AG04449 (cell line): ENCODE measurements at regions of chr3 and their contacts with region 1.

Region 1: DNA sequence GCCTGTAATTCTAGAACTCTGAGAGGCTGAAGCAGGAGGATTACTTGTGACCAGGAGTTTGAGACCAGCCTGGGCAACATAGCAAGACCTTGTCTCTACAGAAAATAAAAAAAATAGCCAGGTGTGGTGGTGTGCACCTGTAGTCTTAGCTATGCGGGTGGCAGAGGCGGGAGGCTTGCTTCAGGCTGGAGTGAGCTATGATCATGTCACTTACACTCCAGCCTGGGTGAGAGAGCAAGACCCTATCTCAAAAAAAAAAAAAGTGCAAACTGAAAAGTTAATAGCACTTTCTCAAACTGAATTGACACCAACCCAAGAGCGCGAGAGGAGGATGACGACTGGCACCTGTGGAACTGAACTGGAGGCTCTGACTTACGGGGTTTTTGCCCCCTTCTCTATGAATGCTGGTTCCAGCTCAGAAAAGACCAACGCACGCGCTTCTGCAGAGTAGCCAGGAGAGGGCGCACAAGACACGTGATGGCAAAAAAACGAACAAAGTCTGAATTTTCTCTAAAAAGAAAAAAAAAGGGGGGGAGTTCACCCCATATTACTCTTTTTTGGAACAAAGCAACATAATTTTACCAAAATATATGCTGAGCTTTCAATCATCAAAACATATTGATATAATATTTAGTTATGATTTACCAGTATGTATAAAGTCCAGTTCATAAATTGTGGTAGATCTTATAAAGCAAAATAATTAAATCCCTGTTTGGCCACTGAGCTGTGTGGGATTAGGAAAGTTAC is 23.7 kb downstream of the CFAP92 start:
- DNase-seq: no peak
- H3K4me3 ChIP-seq: no peak overlapping the region
- CTCF ChIP-seq: peak; percentile 80

Region 2: DNA sequence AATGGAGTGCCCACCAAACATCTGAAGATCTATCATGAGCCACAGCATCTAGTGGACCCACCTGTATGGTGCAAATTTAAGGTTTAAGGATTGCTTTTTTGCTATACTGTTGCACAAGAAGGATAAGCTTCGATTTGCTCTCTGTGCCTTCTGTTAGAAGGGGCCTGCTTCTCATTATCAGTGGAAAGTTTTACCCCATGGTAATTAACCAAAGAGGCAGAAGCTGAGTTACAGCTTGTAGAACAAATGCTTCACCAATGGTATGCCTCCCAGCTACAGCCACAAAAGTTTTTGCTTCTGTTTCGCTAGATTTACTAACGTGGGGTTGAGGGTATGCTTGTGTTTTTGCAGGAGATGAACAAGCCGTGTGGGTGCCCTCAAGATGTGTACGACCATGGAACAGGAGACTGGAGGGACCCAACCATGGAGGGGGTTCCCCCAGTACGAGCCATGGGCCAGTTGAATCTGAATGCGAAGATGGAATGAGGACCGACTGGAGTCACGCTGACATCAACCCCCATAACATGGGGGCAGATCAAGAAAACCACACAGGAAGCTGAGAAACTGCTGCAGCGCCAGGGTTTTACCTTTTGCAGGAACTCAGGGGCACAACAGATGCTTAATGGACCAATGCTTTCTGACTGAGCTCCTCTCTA is 47.2 kb before region 1 on chr3:
- CTCF ChIA-PET with region 1: interaction called, 11 read pairs
- POLR2A ChIA-PET with region 1: no interaction called
- DNase-seq: no peak
- H3K4me3 ChIP-seq: no peak overlapping the region
- CTCF ChIP-seq: no peak

Region 3: GRCh38 chr3:128984596-128984995 is 14.4 kb after region 1 on chr3:
- CTCF ChIA-PET with region 1: interaction called, 97 read pairs
- POLR2A ChIA-PET with region 1: no interaction called
- DNase-seq: peak; percentile 23
- H3K4me3 ChIP-seq: no peak overlapping the region
- CTCF ChIP-seq: no peak

Region 4: DNA sequence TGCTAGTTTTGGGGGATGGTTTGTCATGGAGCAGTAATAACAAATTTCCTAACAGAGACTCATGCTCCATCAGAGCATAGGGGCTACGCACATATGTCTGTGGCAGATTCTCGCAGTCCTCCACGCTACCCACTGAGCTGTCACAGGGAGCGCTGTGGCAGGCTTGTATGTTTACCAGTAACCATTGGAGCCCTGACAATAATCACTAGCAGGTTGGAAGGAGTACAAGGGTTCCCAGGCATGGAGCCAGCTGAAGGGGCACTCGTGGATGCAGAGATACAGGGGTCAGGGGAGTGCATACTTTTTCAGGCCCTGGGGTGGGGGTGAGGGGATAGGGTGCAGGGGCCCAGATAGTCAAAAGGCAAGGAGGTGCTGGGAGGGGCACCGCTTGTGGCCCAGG is 82.5 kb after region 1 on chr3:
- CTCF ChIA-PET with region 1: interaction called, 42 read pairs
- POLR2A ChIA-PET with region 1: no interaction called
- DNase-seq: no peak
- H3K4me3 ChIP-seq: no peak overlapping the region
- CTCF ChIP-seq: no peak

Region 5: GRCh38 chr3:129160891-129161859 is 191.0 kb after region 1 on chr3 and contains the start of gene ISY1:
- CTCF ChIA-PET with region 1: interaction called, 21 read pairs
- POLR2A ChIA-PET with region 1: interaction called, 3 read pairs
- DNase-seq: peak; percentile 63
- H3K4me3 ChIP-seq: peak within 1 kb of the TSS; percentile 80
- CTCF ChIP-seq: peak; percentile 89

Region 6: DNA sequence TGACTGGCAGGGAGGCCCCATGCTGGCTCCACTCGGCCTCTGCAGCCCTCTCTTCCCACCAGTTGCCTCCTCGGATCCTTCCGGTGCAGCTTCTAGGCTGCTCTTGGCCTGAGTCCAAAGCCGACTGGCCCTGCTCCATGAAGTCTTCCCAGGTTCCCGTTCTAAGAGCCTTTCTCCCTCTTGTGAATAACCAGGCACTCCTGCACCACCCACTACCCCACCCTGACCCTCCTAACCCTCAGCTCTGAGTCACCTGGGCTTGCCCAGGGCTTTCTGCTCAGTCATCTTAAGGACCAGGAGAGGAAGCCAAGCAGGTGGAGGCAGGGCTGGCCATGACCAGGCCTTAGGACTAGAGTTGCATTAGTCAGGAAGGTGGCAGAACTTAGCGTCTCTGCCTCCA is 241.6 kb after region 1 on chr3:
- CTCF ChIA-PET with region 1: no interaction called
- POLR2A ChIA-PET with region 1: no interaction called
- DNase-seq: no peak
- H3K4me3 ChIP-seq: no peak overlapping the region
- CTCF ChIP-seq: no peak

Region 7: DNA sequence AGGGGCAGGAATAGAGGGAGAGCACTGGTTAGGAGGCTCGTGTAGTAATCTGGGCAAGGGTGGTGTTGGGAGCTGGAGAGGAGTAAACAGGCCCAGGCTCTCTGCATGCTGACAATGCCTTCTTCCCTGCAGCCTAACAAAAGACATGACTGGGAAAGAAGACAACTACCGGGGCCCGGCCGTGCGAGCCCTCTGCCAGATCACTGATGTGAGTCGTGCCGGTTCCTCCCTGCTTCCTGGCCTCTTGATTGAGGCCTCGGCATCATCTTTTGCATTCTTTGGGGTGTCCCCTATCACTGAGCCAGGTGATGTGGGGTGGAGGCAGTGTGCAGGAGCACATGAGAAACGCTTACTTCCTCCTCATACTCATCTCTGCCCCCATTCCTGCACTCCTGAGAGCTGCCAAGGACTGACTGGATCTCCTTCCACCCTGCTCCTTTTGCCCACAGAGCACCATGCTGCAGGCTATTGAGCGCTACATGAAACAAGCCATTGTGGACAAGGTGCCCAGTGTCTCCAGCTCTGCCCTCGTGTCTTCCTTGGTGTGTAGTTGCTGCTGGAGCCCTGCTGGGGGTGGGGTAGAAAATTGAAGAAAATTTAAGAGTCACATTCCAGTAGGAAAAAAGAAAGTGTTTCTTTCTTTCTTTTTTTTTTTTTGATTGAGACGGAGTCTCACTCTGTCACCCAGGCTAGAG is 284.5 kb after region 1 on chr3:
- CTCF ChIA-PET with region 1: interaction called, 196 read pairs
- POLR2A ChIA-PET with region 1: interaction called, 4 read pairs
- DNase-seq: no peak
- H3K4me3 ChIP-seq: no peak overlapping the region
- CTCF ChIP-seq: no peak

Region 8: GRCh38 chr3:129323651-129324294 is 353.6 kb after region 1 on chr3:
- CTCF ChIA-PET with region 1: interaction called, 10 read pairs
- POLR2A ChIA-PET with region 1: no interaction called
- DNase-seq: no peak
- H3K4me3 ChIP-seq: no peak overlapping the region
- CTCF ChIP-seq: peak; percentile 14

Region 9: GRCh38 chr3:129413687-129414506 is 443.7 kb after region 1 on chr3:
- CTCF ChIA-PET with region 1: no interaction called
- POLR2A ChIA-PET with region 1: no interaction called
- DNase-seq: peak; percentile 61
- H3K4me3 ChIP-seq: no peak overlapping the region
- CTCF ChIP-seq: no peak